ENCODE measurements at regions of chr15 and their contacts with region 1.

Region 1: GRCh38 chr15:70121624-70122297 is 24.0 kb upstream of the TLE3 start:
- DNase-seq: peak in 1 of 2 experiments; percentile 54
- ATAC-seq: peak; percentile 36 to 81; a peak in 3 of 6 replicates
- H3K4me3 ChIP-seq: no peak overlapping the region
- H3K27ac ChIP-seq: peak overlapping the region in 1 of 2 experiments; percentile 8; a peak in 1 of 6 replicates
- H3K4me1 ChIP-seq: peaks cover 13% of the 10 kb centered on the region
- CTCF ChIP-seq: peak; percentile 25; the same call in 1 of the 3 replicates
- EP300 ChIP-seq: no peak
- POLR2A ChIP-seq: no peak
- RAD21 ChIP-seq: peak in 1 of 2 experiments; percentile 36; a peak in 2 of 5 replicates

Region 2: DNA sequence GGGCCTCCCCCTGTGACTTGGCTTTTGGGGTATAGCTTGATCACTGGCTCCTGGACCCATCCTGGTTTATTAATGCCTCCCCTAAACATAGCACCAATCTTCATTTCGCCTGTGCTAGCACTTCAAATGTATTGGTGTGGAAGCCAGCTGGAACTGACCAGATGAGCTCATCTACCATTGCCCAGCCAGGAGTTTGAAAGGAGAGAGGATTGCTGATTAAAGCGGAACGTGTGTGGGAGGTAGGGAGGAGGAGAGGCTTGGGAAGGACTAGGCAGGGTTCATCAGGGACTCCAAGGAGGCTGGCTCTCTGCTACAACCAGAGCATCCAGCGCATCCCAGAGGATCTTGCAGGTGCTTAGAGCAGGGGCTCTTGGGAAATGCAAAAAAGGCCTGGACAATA is 10.4 kb after region 1 on chr15:
- CTCF ChIA-PET with region 1: interaction called, 28 read pairs
- POLR2A ChIA-PET with region 1: no interaction called
- DNase-seq: no peak
- ATAC-seq: no peak
- H3K4me3 ChIP-seq: no peak overlapping the region
- H3K27ac ChIP-seq: no peak overlapping the region
- H3K4me1 ChIP-seq: peaks cover 17% of the 10 kb centered on the region
- CTCF ChIP-seq: no peak
- EP300 ChIP-seq: no peak
- POLR2A ChIP-seq: no peak
- RAD21 ChIP-seq: no peak

Measured in A549 (cell line).